Activated CD4-positive, alpha-beta memory T cell treated with anti-CD3 and anti-CD28 coated beads for 36 hours (primary cell): ENCODE measurements at regions of chr15 and their contacts with region 1.

Region 1: GRCh38 chr15:90931737-90932659 is at the start of gene HDDC3:
- DNase-seq: peak; percentile 93
- H3K4me3 Mint-ChIP-seq: peak within 1 kb of the TSS; percentile 99
- H3K27ac Mint-ChIP-seq: peak within 1 kb of the TSS; percentile 100
- H3K4me1 Mint-ChIP-seq: peaks cover 47% of the 10 kb centered on the region
- H3K27me3 Mint-ChIP-seq: no peaks in the 10 kb centered on the region
- total RNA-seq, gene HDDC3: 45.0 to 45.8 TPM

Region 2: DNA sequence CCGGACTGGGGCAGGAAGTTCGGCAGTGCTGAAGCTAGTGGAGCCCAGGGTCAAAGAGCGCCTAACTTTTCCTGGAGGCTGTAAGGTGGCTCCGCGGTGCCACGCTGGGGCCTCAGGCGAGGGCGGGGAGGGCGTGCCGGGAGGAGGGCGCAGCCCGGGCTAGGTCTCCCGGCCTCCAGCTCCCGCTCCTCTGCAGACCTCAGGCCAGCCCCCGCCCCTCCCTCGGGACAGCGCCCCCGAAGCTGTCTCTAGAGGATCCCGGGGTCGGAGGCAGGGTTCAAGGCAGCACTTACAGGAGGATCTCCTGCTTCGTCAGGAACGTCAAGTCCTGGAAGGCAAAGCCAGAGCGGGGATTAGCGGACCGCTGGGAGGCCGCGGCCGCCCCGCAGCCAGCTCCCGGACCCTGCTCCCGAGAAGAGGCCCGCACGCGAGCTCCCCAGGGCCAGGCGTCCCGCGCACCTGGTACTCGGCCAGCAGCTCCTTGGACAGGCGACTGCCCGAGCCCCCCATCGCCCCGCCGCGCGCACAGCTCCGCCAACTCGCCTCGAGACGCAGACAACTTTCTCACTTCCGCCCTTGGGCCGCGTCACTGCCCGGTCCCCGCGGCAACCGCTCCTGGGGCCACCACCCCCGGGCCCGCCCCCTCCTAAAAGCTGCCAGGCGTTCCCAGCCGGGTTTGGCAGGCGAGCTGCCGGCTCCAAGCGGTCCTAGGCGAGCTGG is 698.5 kb before region 1 on chr15 and contains the start of gene CIB1:
- CTCF ChIA-PET with region 1: interaction called, 4 read pairs
- POLR2A ChIA-PET with region 1: interaction called, 3 read pairs
- intact Hi-C with region 1: loop called (anchors 5 kb)
- DNase-seq: peak; percentile 99
- H3K4me3 Mint-ChIP-seq: peak within 1 kb of the TSS; percentile 94
- H3K27ac Mint-ChIP-seq: peak within 1 kb of the TSS; percentile 92
- H3K4me1 Mint-ChIP-seq: peaks cover 54% of the 10 kb centered on the region
- H3K27me3 Mint-ChIP-seq: no peaks in the 10 kb centered on the region
- total RNA-seq, gene CIB1: 162 to 170 TPM

Region 3: DNA sequence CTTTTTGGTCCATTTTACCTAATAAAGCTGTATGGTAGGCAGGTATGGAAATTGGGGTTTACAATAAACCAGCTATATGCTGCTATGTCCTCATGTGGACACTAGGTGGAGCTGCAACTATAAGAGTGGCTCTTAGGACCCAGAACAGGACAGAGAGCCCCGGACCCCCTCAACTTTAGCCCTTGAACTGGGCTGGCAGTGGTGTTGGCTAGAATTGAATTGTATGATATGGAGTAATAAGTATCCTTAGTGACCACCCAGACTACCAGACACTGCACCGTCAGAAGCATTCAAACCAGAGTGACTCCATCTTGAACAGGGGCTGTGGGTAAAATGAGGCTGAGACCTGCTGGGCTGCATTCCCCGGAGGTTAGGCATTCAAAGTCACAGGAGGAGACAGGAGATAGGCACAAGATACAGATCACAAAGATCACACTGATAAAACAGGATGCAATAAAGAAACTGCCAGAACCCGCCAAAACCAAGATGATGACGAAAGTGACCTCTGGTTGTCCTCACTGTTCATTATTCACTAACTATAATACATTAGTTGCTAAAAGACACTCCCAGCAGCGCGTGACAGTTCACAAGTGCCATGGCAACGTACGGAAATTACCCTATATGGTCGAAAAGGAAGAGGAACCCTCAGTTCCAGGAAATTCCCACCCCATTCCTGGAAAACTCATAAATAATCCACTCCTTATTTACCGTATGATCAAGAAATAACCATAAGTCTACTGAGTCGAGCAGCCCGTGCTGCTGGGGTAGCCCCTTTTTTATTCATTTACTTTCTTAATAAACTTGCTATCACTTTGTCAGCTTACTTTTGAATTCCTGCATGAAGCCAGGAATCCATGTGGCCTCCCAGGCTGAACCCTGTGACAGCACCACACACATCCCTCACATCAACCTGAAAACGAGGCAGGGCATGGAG is 283.6 kb before region 1 on chr15:
- CTCF ChIA-PET with region 1: interaction called, 41 read pairs
- POLR2A ChIA-PET with region 1: interaction called, 6 read pairs
- intact Hi-C with region 1: loop called (anchors 1 kb)
- DNase-seq: peak; percentile 81
- H3K4me3 Mint-ChIP-seq: peak overlapping the region; percentile 53
- H3K27ac Mint-ChIP-seq: peak overlapping the region; percentile 92
- H3K4me1 Mint-ChIP-seq: peaks cover 24% of the 10 kb centered on the region
- H3K27me3 Mint-ChIP-seq: no peaks in the 10 kb centered on the region

Region 4: GRCh38 chr15:90851114-90851513 is 80.9 kb before region 1 on chr15:
- CTCF ChIA-PET with region 1: interaction called, 5 read pairs
- POLR2A ChIA-PET with region 1: interaction called, 3 read pairs
- intact Hi-C with region 1: loop called (anchors 1 kb)
- DNase-seq: peak; percentile 83
- H3K4me3 Mint-ChIP-seq: peak overlapping the region; percentile 25
- H3K27ac Mint-ChIP-seq: peak overlapping the region; percentile 98
- H3K4me1 Mint-ChIP-seq: peaks cover 51% of the 10 kb centered on the region
- H3K27me3 Mint-ChIP-seq: no peaks in the 10 kb centered on the region

Region 5: GRCh38 chr15:90902040-90902839 is 29.8 kb before region 1 on chr15:
- CTCF ChIA-PET with region 1: interaction called, 231 read pairs
- POLR2A ChIA-PET with region 1: interaction called, 82 read pairs
- intact Hi-C with region 1: loop called (anchors 1 kb)
- DNase-seq: peak; percentile 82
- H3K4me3 Mint-ChIP-seq: peak overlapping the region; percentile 83
- H3K27ac Mint-ChIP-seq: peak overlapping the region; percentile 88
- H3K4me1 Mint-ChIP-seq: peaks cover 25% of the 10 kb centered on the region
- H3K27me3 Mint-ChIP-seq: no peaks in the 10 kb centered on the region

Region 6: GRCh38 chr15:91022075-91022835 is 90.3 kb after region 1 on chr15 and contains the start of gene VPS33B:
- CTCF ChIA-PET with region 1: interaction called, 18 read pairs
- POLR2A ChIA-PET with region 1: interaction called, 7 read pairs
- intact Hi-C with region 1: no loop called
- DNase-seq: peak; percentile 87
- H3K4me3 Mint-ChIP-seq: peak within 1 kb of the TSS; percentile 89
- H3K27ac Mint-ChIP-seq: peak within 1 kb of the TSS; percentile 90
- H3K4me1 Mint-ChIP-seq: peaks cover 32% of the 10 kb centered on the region
- H3K27me3 Mint-ChIP-seq: no peaks in the 10 kb centered on the region
- total RNA-seq, gene VPS33B: 26.4 to 26.5 TPM

Region 7: DNA sequence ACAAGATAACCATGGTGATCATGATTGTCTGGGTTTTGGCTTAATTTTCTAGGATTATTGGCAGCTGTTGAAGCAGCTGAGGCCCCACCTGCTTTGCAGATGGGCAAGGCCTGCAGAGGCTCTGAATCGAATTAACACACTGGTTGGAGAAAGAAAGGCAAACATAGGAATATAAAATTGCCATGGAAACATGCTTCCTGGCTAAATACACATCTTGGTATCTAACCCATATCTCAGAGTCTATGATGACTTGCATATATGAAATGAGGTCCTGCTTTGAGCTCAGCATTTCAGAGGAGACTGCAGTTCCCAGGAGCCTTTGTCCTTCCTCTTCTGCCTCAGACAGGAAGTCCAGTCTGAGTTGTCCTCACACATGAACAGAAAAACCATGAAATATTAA is 143.7 kb after region 1 on chr15:
- CTCF ChIA-PET with region 1: no interaction called
- POLR2A ChIA-PET with region 1: no interaction called
- intact Hi-C with region 1: no loop called
- DNase-seq: no peak
- H3K4me3 Mint-ChIP-seq: no peak overlapping the region
- H3K27ac Mint-ChIP-seq: no peak overlapping the region
- H3K4me1 Mint-ChIP-seq: no peaks in the 10 kb centered on the region
- H3K27me3 Mint-ChIP-seq: peaks cover 7% of the 10 kb centered on the region

Region 8: GRCh38 chr15:91731483-91731882 is 799.5 kb after region 1 on chr15:
- CTCF ChIA-PET with region 1: no interaction called
- POLR2A ChIA-PET with region 1: no interaction called
- intact Hi-C with region 1: no loop called
- DNase-seq: no peak
- H3K4me3 Mint-ChIP-seq: no peak overlapping the region
- H3K27ac Mint-ChIP-seq: no peak overlapping the region
- H3K4me1 Mint-ChIP-seq: no peaks in the 10 kb centered on the region
- H3K27me3 Mint-ChIP-seq: peaks cover 29% of the 10 kb centered on the region

Region 9: GRCh38 chr15:91852741-91853510 is 920.9 kb after region 1 on chr15:
- CTCF ChIA-PET with region 1: no interaction called
- POLR2A ChIA-PET with region 1: no interaction called
- intact Hi-C with region 1: loop called (anchors 10 kb)
- DNase-seq: peak; percentile 80
- H3K4me3 Mint-ChIP-seq: peak overlapping the region; percentile 77
- H3K27ac Mint-ChIP-seq: peak overlapping the region; percentile 77
- H3K4me1 Mint-ChIP-seq: peaks cover 58% of the 10 kb centered on the region
- H3K27me3 Mint-ChIP-seq: no peaks in the 10 kb centered on the region